ENCODE measurements at regions of chr2 and their contacts with region 1.

Region 1: DNA sequence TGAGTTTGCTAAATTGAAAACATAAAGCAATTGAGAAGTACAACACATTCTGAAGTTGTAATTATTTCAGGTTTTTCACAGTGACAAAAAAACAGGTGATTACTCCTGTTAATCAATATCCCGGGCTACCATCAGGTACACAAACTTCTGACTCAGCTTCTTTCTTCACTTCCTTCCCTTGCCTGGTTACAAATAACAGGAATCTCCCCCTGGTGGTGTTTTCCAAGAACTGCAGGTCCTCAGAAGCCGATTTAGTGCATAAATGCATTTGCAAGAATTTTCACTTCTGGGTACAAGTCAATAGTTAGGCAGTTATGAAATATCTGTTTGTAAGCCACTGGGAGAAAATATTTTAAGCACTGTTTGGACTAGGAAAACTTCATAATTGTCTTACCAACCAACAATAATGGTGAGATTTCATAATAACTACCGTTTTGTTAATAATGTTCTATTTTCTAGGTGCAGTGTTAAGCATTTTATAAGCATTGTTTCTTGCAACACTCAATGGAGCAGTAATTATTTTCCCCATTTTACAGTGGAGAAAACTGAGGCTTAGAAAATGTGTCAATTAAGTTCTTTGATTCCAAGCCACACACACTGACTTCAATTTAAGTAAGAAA is 12.4 kb upstream of the GMCL1 start:
- DNase-seq: peak; percentile 81
- H3K4me3 Mint-ChIP-seq: no peak overlapping the region
- H3K27ac Mint-ChIP-seq: no peak overlapping the region
- H3K4me1 Mint-ChIP-seq: peaks cover 4% of the 10 kb centered on the region
- H3K27me3 Mint-ChIP-seq: no peaks in the 10 kb centered on the region

Region 2: GRCh38 chr2:69559442-69560146 is 257.4 kb before region 1 on chr2:
- CTCF ChIA-PET with region 1: interaction called, 18 read pairs
- POLR2A ChIA-PET with region 1: no interaction called
- intact Hi-C with region 1: loop called (anchors 5 kb)
- DNase-seq: no peak
- H3K4me3 Mint-ChIP-seq: no peak overlapping the region
- H3K27ac Mint-ChIP-seq: no peak overlapping the region
- H3K4me1 Mint-ChIP-seq: peaks cover 77% of the 10 kb centered on the region
- H3K27me3 Mint-ChIP-seq: no peaks in the 10 kb centered on the region

Region 3: DNA sequence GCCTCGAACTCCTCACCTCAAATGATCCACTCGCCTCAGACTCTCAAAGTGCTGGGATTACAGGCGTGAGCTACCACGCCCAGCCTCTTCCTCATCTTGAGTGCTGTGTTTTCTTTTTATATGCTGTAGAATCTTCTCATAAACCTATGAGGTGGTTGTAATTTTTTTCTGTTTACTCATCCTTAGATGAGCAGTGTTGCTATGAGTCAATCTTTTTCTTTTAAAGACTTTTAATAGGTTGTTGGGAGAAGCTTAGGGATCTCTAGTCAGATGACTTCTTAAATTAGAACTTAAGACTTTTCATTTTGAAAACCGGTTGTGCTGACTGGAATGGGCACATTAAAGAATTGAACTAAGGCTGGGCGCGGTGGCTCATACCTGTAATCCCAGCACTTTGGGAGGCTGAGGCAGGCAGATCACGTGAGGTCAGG is 164.8 kb before region 1 on chr2:
- CTCF ChIA-PET with region 1: no interaction called
- POLR2A ChIA-PET with region 1: no interaction called
- intact Hi-C with region 1: no loop called
- DNase-seq: peak; percentile 56
- H3K4me3 Mint-ChIP-seq: peak overlapping the region; percentile 2
- H3K27ac Mint-ChIP-seq: peak overlapping the region; percentile 66
- H3K4me1 Mint-ChIP-seq: peaks cover 43% of the 10 kb centered on the region
- H3K27me3 Mint-ChIP-seq: no peaks in the 10 kb centered on the region

Region 4: GRCh38 chr2:69734035-69734631 is 82.9 kb before region 1 on chr2:
- CTCF ChIA-PET with region 1: interaction called, 29 read pairs
- POLR2A ChIA-PET with region 1: no interaction called
- intact Hi-C with region 1: no loop called
- DNase-seq: no peak
- H3K4me3 Mint-ChIP-seq: no peak overlapping the region
- H3K27ac Mint-ChIP-seq: no peak overlapping the region
- H3K4me1 Mint-ChIP-seq: no peaks in the 10 kb centered on the region
- H3K27me3 Mint-ChIP-seq: no peaks in the 10 kb centered on the region

Region 5: GRCh38 chr2:69741619-69742466 is 75.2 kb before region 1 on chr2 and contains the start of gene ANXA4:
- CTCF ChIA-PET with region 1: interaction called, 11 read pairs
- POLR2A ChIA-PET with region 1: no interaction called
- intact Hi-C with region 1: loop called (anchors 5 kb)
- DNase-seq: peak; percentile 76
- H3K4me3 Mint-ChIP-seq: peak within 1 kb of the TSS; percentile 81
- H3K27ac Mint-ChIP-seq: peak within 1 kb of the TSS; percentile 82
- H3K4me1 Mint-ChIP-seq: peaks cover 11% of the 10 kb centered on the region
- H3K27me3 Mint-ChIP-seq: no peaks in the 10 kb centered on the region
- total RNA-seq, gene ANXA4: 41.3 to 43.2 TPM

Region 6: DNA sequence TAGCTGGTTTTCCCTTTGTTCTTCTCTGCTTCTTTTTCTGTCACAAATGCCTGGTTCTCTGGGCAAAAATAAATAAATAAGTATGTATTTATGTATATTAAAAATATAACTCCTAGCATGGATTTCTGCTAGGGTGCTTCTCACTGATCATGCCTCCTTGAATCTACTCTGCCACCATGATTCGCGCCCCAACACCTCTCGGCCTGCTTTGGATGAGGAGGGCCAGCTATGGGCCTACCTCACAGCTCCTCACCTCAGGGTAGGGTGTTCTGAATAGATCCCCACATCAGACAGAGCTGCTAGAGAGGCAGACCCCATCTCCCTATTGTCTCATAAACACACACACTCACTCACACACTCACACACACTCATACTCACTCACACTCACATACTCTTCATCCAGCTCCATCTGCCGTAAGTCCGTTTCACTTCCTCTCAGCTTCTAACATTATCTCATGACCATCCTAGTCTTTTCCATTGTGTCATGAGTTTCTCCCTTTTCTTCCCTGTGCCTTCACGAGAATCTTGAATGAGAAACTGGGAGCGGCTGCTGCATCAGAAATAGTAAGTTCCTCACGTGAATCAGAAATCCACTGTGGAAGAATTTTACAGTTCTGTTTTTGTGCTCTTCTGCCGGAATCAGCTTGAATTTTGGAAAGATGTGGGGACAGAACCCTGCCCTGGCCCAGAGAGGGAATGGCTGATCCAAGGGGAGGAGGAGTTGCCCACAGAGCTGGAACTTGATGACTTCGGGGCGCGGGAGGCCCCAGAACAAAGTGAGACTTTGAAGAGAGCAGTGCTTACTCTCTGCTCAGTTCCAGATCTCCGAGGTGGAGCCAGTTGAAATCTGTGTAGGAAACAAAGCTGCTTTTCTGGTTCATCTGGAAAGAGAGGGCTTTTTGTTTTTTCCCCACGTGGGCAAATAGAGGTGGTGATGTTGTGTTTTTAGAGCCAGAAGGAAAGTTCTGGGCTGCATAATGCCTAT is 54.2 kb before region 1 on chr2:
- CTCF ChIA-PET with region 1: interaction called, 7 read pairs
- POLR2A ChIA-PET with region 1: no interaction called
- intact Hi-C with region 1: loop called (anchors 5 kb)
- DNase-seq: no peak
- H3K4me3 Mint-ChIP-seq: no peak overlapping the region
- H3K27ac Mint-ChIP-seq: no peak overlapping the region
- H3K4me1 Mint-ChIP-seq: peaks cover 23% of the 10 kb centered on the region
- H3K27me3 Mint-ChIP-seq: no peaks in the 10 kb centered on the region

Region 7: GRCh38 chr2:69770193-69771146 is 46.6 kb before region 1 on chr2:
- CTCF ChIA-PET with region 1: interaction called, 11 read pairs
- POLR2A ChIA-PET with region 1: no interaction called
- intact Hi-C with region 1: no loop called
- DNase-seq: peak; percentile 42
- H3K4me3 Mint-ChIP-seq: no peak overlapping the region
- H3K27ac Mint-ChIP-seq: peak overlapping the region; percentile 19
- H3K4me1 Mint-ChIP-seq: peaks cover 54% of the 10 kb centered on the region
- H3K27me3 Mint-ChIP-seq: no peaks in the 10 kb centered on the region

Region 8: DNA sequence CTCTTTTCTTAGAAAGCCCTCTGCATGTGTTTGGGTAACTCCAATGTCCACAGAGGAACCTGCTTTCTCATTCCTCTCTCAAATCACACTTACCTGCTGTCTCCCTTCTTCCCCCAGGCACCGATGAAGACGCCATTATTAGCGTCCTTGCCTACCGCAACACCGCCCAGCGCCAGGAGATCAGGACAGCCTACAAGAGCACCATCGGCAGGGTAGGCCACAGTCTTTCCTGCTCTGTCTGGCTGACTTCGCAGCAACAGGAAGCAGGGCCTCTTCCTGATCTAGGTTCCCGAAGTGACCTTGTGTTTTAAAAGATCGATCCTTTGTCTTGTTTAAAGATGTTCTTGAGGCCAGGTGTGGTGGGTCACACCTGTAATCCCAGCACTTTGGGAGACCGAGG is 12.6 kb before region 1 on chr2:
- CTCF ChIA-PET with region 1: interaction called, 20 read pairs
- POLR2A ChIA-PET with region 1: no interaction called
- intact Hi-C with region 1: no loop called
- DNase-seq: peak; percentile 11
- H3K4me3 Mint-ChIP-seq: no peak overlapping the region
- H3K27ac Mint-ChIP-seq: no peak overlapping the region
- H3K4me1 Mint-ChIP-seq: peaks cover 13% of the 10 kb centered on the region
- H3K27me3 Mint-ChIP-seq: no peaks in the 10 kb centered on the region

Region 9: GRCh38 chr2:69973335-69973735 is 156.3 kb after region 1 on chr2:
- CTCF ChIA-PET with region 1: no interaction called
- POLR2A ChIA-PET with region 1: no interaction called
- intact Hi-C with region 1: no loop called
- DNase-seq: no peak
- H3K4me3 Mint-ChIP-seq: no peak overlapping the region
- H3K27ac Mint-ChIP-seq: no peak overlapping the region
- H3K4me1 Mint-ChIP-seq: peaks cover 11% of the 10 kb centered on the region
- H3K27me3 Mint-ChIP-seq: no peaks in the 10 kb centered on the region